ENCODE measurements at regions of chr6 and their contacts with region 1.

Region 1: GRCh38 chr6:7243179-7243981 is 69.6 kb downstream of the SSR1 start:
- DNase-seq: peak; percentile 65
- H3K4me3 ChIP-seq: no peak overlapping the region
- H3K27ac ChIP-seq: peak overlapping the region; percentile 41 to 63
- H3K4me1 ChIP-seq: peaks cover 19% of the 10 kb centered on the region
- H3K27me3 ChIP-seq: no peaks in the 10 kb centered on the region
- CTCF ChIP-seq: peak; percentile 80 to 91 (median 81)
- POLR2A ChIP-seq: no peak

Region 2: GRCh38 chr6:6724539-6725467 is 518.6 kb before region 1 on chr6:
- intact Hi-C with region 1: loop called (anchors 10 kb)
- DNase-seq: peak; percentile 87
- H3K4me3 ChIP-seq: peak overlapping the region; percentile 16 to 40
- H3K27ac ChIP-seq: peak overlapping the region; percentile 60 to 90
- H3K4me1 ChIP-seq: peaks cover 21% of the 10 kb centered on the region
- H3K27me3 ChIP-seq: no peaks in the 10 kb centered on the region
- CTCF ChIP-seq: peak in 2 of 3 experiments; percentile 56 to 64
- POLR2A ChIP-seq: no peak